ENCODE measurements at regions of chr2 and their contacts with region 1.

Region 1: GRCh38 chr2:18520451-18521425 is 39.7 kb downstream of the RDH14 start:
- DNase-seq: peak; percentile 58 to 79 (median 74)
- H3K4me3 ChIP-seq: no peak overlapping the region
- H3K27ac ChIP-seq: no peak overlapping the region
- H3K4me1 ChIP-seq: peaks cover 0 to under 1% (median 0%) of the 10 kb centered on the region in 4 experiments
- H3K27me3 ChIP-seq: peaks cover 0 to 15% (median 9%) of the 10 kb centered on the region in 5 experiments

Region 2: DNA sequence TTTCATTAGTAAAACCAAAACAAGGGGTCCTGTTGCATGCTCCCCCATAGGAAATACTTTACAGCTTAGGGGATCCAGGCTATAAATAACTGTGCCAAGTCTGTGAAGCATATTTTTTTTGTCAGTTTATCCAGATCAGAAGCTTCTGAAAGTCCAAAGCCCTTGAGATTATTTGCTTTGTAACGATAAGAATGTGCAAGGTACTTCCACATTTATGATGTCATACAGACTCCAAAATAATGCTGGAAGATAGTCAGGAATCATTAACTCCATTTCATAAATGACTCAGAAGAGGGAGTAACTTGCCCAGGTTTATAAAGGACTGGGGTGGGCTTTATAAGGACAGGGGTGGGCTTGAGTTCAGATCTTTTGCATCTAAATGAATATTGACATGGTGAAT is 10.5 kb after region 1 on chr2:
- CTCF ChIA-PET with region 1: interaction called, 15 read pairs
- POLR2A ChIA-PET with region 1: no interaction called
- DNase-seq: no peak
- H3K4me3 ChIP-seq: no peak overlapping the region
- H3K27ac ChIP-seq: no peak overlapping the region
- H3K4me1 ChIP-seq: no peaks in the 10 kb centered on the region
- H3K27me3 ChIP-seq: peaks cover 0 to 2% (median 0%) of the 10 kb centered on the region in 5 experiments

Region 3: GRCh38 chr2:18560031-18560796 is 39.5 kb after region 1 on chr2 and contains the start of gene RDH14:
- CTCF ChIA-PET with region 1: interaction called, 13 read pairs
- POLR2A ChIA-PET with region 1: interaction called, 3 read pairs
- DNase-seq: peak; percentile 93 to 98 (median 96)
- H3K4me3 ChIP-seq: peak within 1 kb of the TSS; percentile 69 to 93 (median 82)
- H3K27ac ChIP-seq: peak within 1 kb of the TSS; percentile 83 to 89
- H3K4me1 ChIP-seq: peaks cover 8 to 22% (median 16%) of the 10 kb centered on the region in 4 experiments
- H3K27me3 ChIP-seq: no peaks in the 10 kb centered on the region